ENCODE measurements at regions of chr10 and their contacts with region 1.

Region 1: GRCh38 chr10:110279407-110279986 is 25.2 kb downstream of the SMNDC1 start:
- DNase-seq: peak; percentile 63
- ATAC-seq: peak; percentile 51
- H3K4me3 Mint-ChIP-seq: no peak overlapping the region
- H3K27ac Mint-ChIP-seq: no peak overlapping the region
- H3K4me1 Mint-ChIP-seq: peaks cover 15% of the 10 kb centered on the region
- H3K27me3 Mint-ChIP-seq: no peaks in the 10 kb centered on the region
- CTCF ChIP-seq: peak; percentile 74

Region 2: DNA sequence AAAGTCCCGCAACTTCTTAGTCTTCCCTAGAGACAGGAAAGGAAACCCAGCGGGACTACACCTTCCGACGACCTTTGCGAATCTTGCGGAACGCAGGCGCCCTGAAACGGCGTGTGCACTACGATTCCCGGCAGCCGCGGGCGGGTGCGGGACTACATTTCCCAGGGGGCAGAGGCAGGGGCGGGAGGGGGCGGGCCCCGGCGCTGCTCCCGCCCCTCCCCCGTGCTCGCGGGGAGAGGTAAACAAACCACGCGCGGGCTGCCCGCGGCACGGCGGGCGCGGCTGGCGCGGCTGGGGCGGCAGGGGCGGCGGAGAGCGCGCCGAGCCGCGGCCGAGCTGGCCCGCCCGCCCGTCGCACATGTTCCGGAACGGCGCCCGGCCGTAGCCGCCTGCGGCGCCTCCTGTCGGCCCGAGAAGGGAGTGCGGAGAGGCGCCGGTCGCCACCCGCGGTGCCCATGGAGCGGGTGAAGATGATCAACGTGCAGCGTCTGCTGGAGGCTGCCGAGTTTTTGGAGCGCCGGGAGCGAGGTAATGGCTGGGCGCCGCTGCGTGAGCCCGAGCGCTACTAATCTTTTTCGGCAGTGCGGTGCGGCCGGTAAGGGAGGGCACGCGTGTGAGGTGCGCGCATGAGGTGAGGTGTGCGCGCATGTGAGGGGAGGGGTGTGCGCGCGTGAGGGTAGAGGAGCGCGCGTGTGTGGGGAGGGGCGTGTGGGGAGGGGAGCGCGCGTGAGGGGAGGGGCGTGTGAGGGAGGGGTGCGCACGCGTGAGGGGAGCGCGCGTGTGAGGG is 53.5 kb before region 1 on chr10:
- CTCF ChIA-PET with region 1: interaction called, 11 read pairs
- POLR2A ChIA-PET with region 1: no interaction called
- intact Hi-C with region 1: no loop called
- DNase-seq: peak; percentile 89
- ATAC-seq: peak; percentile 65
- H3K4me3 Mint-ChIP-seq: peak overlapping the region; percentile 94
- H3K27ac Mint-ChIP-seq: peak overlapping the region; percentile 96
- H3K4me1 Mint-ChIP-seq: peaks cover 38% of the 10 kb centered on the region
- H3K27me3 Mint-ChIP-seq: no peaks in the 10 kb centered on the region
- CTCF ChIP-seq: peak; percentile 63

Region 3: GRCh38 chr10:110244550-110244949 is 34.9 kb before region 1 on chr10:
- CTCF ChIA-PET with region 1: interaction called, 12 read pairs
- POLR2A ChIA-PET with region 1: interaction called, 3 read pairs
- intact Hi-C with region 1: no loop called
- DNase-seq: no peak
- ATAC-seq: no peak
- H3K4me3 Mint-ChIP-seq: no peak overlapping the region
- H3K27ac Mint-ChIP-seq: no peak overlapping the region
- H3K4me1 Mint-ChIP-seq: peaks cover 21% of the 10 kb centered on the region
- H3K27me3 Mint-ChIP-seq: peaks cover 14% of the 10 kb centered on the region
- CTCF ChIP-seq: no peak

Region 4: DNA sequence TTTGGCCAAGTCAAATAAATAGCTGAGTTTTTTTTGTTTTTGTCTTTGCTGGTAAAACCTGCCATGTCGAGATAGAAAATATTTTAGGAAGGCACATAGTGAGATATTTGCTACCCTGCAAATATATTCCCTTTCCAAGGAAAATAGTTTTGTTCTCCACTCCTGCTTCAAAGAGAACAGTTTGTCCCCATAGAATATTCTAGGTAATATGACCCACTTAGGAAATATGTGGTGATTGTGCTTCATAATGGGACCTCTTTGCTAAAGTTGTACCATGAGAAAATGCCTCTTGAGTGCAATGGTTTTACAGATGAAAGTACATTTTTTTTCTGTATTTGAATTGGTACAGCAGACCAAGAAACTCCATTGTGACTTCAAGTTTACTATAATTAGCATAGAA is 16.3 kb before region 1 on chr10:
- CTCF ChIA-PET with region 1: interaction called, 13 read pairs
- POLR2A ChIA-PET with region 1: no interaction called
- intact Hi-C with region 1: no loop called
- DNase-seq: no peak
- ATAC-seq: no peak
- H3K4me3 Mint-ChIP-seq: no peak overlapping the region
- H3K27ac Mint-ChIP-seq: no peak overlapping the region
- H3K4me1 Mint-ChIP-seq: no peaks in the 10 kb centered on the region
- H3K27me3 Mint-ChIP-seq: peaks cover 1% of the 10 kb centered on the region
- CTCF ChIP-seq: no peak